ENCODE measurements at regions of chr5 and their contacts with region 1.

Region 1: DNA sequence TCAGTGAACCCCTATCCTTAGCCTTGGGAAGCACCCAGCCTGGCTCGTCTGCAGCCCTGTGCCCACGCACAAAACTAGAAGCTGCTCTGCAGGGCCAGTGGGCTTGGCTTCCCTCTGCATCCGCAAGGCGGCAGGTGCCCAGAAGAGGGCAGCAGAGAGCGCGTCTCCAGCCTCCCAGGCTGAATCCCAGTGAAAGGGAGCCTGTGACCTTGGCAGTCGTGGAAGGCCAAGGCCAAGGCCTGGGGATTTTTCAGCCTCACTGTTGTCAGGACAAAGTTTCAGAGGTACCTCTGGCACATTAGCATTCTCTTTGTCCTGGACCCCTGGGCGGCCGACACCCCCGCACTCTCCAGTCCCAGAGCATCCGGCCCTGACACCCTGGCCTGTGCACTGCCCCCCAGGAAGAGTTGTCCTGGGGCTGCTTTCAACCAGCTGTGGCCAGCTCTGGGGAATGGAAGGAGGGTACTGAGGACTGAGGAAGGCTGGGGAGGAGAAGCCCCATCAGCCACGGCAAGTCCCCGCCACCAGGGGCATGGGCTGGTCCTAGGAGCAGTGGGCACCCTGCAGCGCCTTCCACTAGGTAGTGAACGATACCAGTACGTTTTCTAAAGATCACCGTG is 63.6 kb upstream of the IL17B start:
- DNase-seq: peak; percentile 91
- H3K4me3 ChIP-seq: no peak overlapping the region; a peak in 1 of 4 replicates
- H3K27ac ChIP-seq: peak overlapping the region; percentile 51 to 70; a peak in 3 of 4 replicates
- H3K4me1 ChIP-seq: peaks cover 4 to 19% of the 10 kb centered on the region in 2 experiments; a peak in 2 of 4 replicates
- H3K27me3 ChIP-seq: no peaks in the 10 kb centered on the region
- CTCF ChIP-seq: peak; percentile 93
- EP300 ChIP-seq: no peak
- RAD21 ChIP-seq: peak; percentile 88

Region 2: GRCh38 chr5:149317281-149318048 is 125.2 kb before region 1 on chr5:
- CTCF ChIA-PET with region 1: interaction called, 31 read pairs
- POLR2A ChIA-PET with region 1: no interaction called
- DNase-seq: peak; percentile 76
- H3K4me3 ChIP-seq: no peak overlapping the region
- H3K27ac ChIP-seq: peak overlapping the region in 1 of 2 experiments; percentile 63; a peak in 2 of 4 replicates
- H3K4me1 ChIP-seq: peaks cover 13 to 20% of the 10 kb centered on the region in 2 experiments
- H3K27me3 ChIP-seq: no peaks in the 10 kb centered on the region
- CTCF ChIP-seq: peak; percentile 75
- EP300 ChIP-seq: no peak
- RAD21 ChIP-seq: peak; percentile 90

Region 3: GRCh38 chr5:149422366-149423048 is 20.2 kb before region 1 on chr5:
- CTCF ChIA-PET with region 1: interaction called, 16 read pairs
- POLR2A ChIA-PET with region 1: interaction called, 3 read pairs
- DNase-seq: peak; percentile 89
- H3K4me3 ChIP-seq: 0 out of 4 replicates have a peak overlapping the region, but pooled peaks of 1 of the 2 experiments have one; percentile 3
- H3K27ac ChIP-seq: peak overlapping the region; percentile 82 to 100
- H3K4me1 ChIP-seq: peaks cover 21 to 79% of the 10 kb centered on the region in 2 experiments
- H3K27me3 ChIP-seq: no peaks in the 10 kb centered on the region
- CTCF ChIP-seq: no peak
- EP300 ChIP-seq: peak; percentile 82 to 99
- RAD21 ChIP-seq: peak; percentile 39

Region 4: GRCh38 chr5:149561848-149562247 is 119.2 kb after region 1 on chr5:
- CTCF ChIA-PET with region 1: interaction called, 111 read pairs
- POLR2A ChIA-PET with region 1: no interaction called
- DNase-seq: peak; percentile 50
- H3K4me3 ChIP-seq: peak overlapping the region; percentile 19 to 42; a peak in 3 of 4 replicates
- H3K27ac ChIP-seq: peak overlapping the region; percentile 88 to 98
- H3K4me1 ChIP-seq: peaks cover 10 to 28% of the 10 kb centered on the region in 2 experiments
- H3K27me3 ChIP-seq: no peaks in the 10 kb centered on the region
- CTCF ChIP-seq: no peak
- EP300 ChIP-seq: peak; percentile 39 to 83; a peak in 3 of 4 replicates
- RAD21 ChIP-seq: no peak

Region 5: DNA sequence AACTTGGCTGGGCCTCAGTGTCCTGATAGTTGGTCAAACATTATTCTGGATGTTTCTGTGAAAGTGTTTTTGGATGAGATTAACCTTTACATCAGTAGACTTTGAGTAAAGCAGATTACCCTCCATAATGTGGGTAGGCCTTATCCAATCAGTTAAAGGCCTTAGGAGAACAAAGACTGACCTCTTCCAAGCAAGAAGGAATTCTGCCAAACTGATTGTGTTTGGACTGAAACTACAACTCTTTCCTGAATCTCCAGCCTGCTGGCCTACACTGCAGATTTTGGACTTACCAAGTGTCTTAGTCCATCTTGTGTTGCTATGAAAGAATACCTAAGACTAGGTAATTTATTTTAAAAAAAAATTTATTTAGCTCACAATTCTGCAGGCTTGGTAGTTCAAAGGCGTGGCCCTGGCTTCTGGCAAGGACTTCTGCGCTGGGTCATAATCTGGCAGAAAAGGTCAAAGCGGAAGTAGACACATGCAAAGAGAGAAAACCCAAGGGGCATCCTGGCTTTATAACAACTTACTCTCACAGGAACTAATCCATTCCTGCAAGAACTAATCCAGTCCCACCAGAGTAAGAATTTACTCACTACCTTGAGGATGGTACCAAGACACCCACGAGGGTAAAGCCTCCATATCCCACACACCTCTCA is 130.0 kb after region 1 on chr5:
- CTCF ChIA-PET with region 1: interaction called, 11 read pairs
- POLR2A ChIA-PET with region 1: no interaction called
- DNase-seq: no peak
- H3K4me3 ChIP-seq: no peak overlapping the region
- H3K27ac ChIP-seq: no peak overlapping the region
- H3K4me1 ChIP-seq: no peaks in the 10 kb centered on the region
- H3K27me3 ChIP-seq: no peaks in the 10 kb centered on the region
- CTCF ChIP-seq: no peak
- EP300 ChIP-seq: no peak
- RAD21 ChIP-seq: no peak

Measured in SK-N-SH (cell line).